ENCODE measurements at regions of chr4 and their contacts with region 1.

Region 1: DNA sequence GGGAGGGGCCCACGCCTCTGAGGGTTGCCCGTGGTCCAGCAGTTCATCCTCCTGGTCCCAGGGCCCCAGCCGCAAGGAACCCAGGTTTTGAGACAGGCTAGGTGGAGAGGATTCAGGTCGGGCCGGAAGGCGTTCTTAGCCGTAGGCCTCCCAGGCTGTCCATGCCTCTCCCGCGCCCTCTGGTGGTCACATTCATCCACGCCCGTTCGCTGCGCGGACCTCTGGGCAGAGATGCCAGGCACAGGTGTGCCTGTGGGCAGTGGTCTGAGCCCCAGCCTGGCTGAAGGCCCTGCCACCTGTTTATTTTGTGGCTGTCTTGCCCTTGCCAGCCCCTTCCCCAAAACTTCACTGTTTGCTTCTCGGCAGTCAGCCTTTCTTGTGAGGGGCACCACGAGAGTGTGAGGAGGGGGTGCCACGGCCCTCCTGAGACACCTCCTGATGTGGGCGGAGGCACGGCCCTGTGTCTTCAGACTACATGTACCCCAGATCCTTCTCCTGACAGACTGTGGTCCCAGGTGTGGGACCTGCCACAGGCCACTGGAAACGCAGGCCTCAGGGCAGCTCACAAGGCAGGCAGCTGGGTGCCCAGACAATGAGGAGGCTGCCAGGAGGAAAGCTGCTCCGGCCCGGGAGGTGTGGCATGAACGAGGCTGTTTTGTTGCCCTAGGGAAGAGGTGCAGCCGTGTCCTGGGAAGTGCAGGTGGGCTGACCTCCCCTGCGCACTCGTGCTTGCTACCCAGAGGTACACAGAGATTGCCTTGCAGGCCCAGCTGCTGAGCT is 5.0 kb downstream of the UVSSA start:
- DNase-seq: peak; percentile 84
- H3K4me3 Mint-ChIP-seq: no peak overlapping the region
- H3K27ac Mint-ChIP-seq: peak overlapping the region; percentile 70
- H3K4me1 Mint-ChIP-seq: peaks cover 20% of the 10 kb centered on the region
- H3K27me3 Mint-ChIP-seq: no peaks in the 10 kb centered on the region

Region 2: GRCh38 chr4:1130316-1131186 is 221.5 kb before region 1 on chr4:
- intact Hi-C with region 1: loop called (anchors 1 kb)
- DNase-seq: peak; percentile 70
- H3K4me3 Mint-ChIP-seq: no peak overlapping the region
- H3K27ac Mint-ChIP-seq: no peak overlapping the region
- H3K4me1 Mint-ChIP-seq: peaks cover 5% of the 10 kb centered on the region
- H3K27me3 Mint-ChIP-seq: peaks cover 14% of the 10 kb centered on the region

Region 3: GRCh38 chr4:1249148-1249730 is 102.8 kb before region 1 on chr4:
- intact Hi-C with region 1: loop called (anchors 1 kb)
- DNase-seq: peak; percentile 83
- H3K4me3 Mint-ChIP-seq: peak overlapping the region; percentile 89
- H3K27ac Mint-ChIP-seq: peak overlapping the region; percentile 96
- H3K4me1 Mint-ChIP-seq: peaks cover 57% of the 10 kb centered on the region
- H3K27me3 Mint-ChIP-seq: no peaks in the 10 kb centered on the region

Region 4: DNA sequence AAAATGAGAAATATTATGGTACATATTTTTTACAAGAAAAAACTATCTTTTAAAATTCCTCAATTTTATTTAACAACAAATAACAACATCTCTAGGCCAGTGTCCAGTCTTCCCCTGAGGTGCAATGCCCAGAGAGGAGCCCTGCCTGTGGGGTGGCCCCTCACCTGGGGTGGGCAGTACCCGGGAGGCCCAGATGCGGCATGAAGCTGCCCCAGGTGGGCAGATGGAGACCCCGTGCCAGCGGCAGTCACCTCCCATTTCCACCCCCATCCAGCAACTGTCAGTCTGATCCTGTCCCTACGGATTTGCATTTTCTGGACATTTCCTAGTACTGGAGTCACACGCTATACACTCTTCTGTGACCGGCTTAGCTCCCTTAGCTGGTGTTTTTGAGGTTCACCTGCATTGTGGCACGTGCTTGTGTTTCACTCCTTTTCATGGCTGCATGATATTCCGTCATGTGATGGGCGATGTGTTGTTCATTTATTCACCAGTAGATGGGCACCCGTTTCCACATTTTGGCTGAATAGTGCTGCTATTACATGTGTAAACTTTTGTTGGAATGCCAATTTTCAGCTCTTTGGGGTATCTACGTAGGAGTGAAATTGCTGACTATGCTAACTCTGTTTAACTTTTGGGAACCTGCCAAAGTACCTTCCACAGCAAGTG is 74.2 kb before region 1 on chr4:
- intact Hi-C with region 1: loop called (anchors 1 kb)
- DNase-seq: no peak
- H3K4me3 Mint-ChIP-seq: no peak overlapping the region
- H3K27ac Mint-ChIP-seq: no peak overlapping the region
- H3K4me1 Mint-ChIP-seq: no peaks in the 10 kb centered on the region
- H3K27me3 Mint-ChIP-seq: peaks cover 3% of the 10 kb centered on the region

Region 5: DNA sequence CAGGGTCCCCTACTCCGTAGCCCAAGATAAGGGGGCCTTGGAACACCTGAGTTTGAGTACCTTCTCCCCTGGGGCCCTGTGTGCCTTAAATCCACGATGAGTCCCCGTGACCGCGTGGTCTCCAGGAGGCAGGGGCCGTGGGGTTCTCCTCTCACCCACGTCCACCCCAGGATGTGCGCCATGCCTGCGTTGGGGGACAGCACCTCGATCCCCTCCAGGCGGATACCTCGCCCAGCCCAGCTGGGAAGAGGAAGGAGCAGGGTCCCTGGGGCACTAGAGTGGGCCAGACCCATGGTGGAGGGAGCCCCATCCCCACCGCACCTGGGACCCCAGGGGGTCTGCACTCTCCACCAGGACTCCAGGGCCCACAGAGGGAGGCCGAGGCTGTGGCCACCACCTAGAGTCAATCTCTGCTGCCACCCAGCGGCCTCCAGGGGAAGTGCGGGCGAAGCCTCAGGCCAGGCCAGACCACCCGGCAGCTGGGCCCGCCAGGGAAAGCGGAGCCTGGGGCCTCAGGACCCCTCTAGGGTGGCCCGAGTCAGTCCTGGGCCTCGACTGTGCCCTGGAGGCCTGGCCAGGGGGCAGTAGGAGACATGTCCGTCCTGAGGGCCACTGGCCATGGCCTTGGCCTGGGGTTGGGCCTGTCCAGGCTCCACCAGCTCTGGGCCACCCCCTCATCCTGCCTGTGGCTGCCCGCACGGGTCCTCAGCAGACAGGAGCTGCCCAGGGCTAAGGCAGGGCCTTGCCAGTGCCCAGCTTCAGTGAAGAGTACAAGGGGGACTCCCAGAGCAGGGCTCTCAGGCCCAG is 277.1 kb after region 1 on chr4:
- intact Hi-C with region 1: loop called (anchors 2 kb)
- DNase-seq: peak; percentile 35
- H3K4me3 Mint-ChIP-seq: no peak overlapping the region
- H3K27ac Mint-ChIP-seq: no peak overlapping the region
- H3K4me1 Mint-ChIP-seq: no peaks in the 10 kb centered on the region
- H3K27me3 Mint-ChIP-seq: no peaks in the 10 kb centered on the region